ENCODE measurements at regions of chr5 and their contacts with region 1.

Region 1: DNA sequence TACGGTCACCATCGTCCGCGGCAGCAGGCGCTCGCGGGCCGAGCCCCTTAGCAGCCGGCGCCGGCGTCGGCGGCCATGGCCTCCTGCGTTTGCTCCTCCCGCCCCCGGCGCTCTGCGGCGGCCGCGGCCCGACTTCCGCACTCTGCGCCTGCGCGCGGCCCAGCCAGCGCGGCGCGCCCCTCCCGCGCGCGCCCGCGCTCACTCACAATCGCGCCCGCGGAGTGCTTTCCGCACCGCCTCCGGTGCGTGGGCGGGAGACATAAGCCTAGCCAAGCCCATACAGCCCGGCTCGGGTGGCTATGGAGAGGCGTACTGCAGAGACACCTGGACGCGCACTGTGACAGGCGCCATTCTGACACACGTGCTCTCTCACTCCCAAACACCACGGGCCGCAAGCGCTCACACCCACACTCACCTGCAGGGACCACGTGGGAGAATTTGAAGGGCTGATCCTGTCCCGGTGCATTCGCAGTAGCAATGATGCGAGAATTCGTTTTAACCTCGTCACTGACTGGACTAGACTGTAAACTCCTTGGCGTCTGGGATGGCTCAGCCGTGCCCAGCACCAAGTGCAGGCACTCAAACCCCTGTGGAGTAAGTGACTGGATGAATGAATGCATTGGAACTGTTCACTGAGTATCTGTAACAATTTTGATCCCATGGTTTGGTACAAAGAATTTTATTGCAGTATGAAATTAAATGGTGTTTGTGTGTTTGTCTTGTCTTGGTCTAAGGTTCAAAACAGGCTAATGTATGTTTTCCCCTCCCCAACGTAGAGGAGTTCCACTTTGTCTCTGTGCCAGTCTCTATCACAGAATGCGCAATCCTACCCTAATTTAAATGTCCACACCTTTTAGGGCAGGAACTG is at the start of gene RNF145:
- DNase-seq: peak; percentile 58
- ATAC-seq: peak; percentile 75
- H3K4me3 ChIP-seq: peak within 1 kb of the TSS; percentile 88 to 94 (median 93)
- H3K27ac ChIP-seq: peak within 1 kb of the TSS; percentile 83
- H3K4me1 ChIP-seq: peaks cover 35% of the 10 kb centered on the region
- H3K27me3 ChIP-seq: no peaks in the 10 kb centered on the region; a peak in 1 of 5 replicates
- CTCF ChIP-seq: no peak
- EP300 ChIP-seq: no peak
- POLR2A ChIP-seq: peak in 1 of 2 experiments; percentile 70; a peak in 2 of 4 replicates
- RAD21 ChIP-seq: 0 out of 2 replicates have a peak, but pooled peaks have one; percentile 10
- total RNA-seq, gene RNF145: 17.5 and 24.6 TPM in 2 replicates

Region 2: GRCh38 chr5:159156426-159157238 is 53.0 kb before region 1 on chr5:
- CTCF ChIA-PET with region 1: no interaction called
- POLR2A ChIA-PET with region 1: interaction called, 7 read pairs
- in situ Hi-C with region 1: no loop called
- intact Hi-C with region 1: loop called (anchors 2 kb)
- DNase-seq: peak; percentile 64
- ATAC-seq: peak; percentile 91
- H3K4me3 ChIP-seq: no peak overlapping the region
- H3K27ac ChIP-seq: no peak overlapping the region
- H3K4me1 ChIP-seq: no peaks in the 10 kb centered on the region
- H3K27me3 ChIP-seq: no peaks in the 10 kb centered on the region; a peak in 1 of 5 replicates
- CTCF ChIP-seq: peak; percentile 81
- EP300 ChIP-seq: no peak
- POLR2A ChIP-seq: no peak
- RAD21 ChIP-seq: peak; percentile 70

Region 3: DNA sequence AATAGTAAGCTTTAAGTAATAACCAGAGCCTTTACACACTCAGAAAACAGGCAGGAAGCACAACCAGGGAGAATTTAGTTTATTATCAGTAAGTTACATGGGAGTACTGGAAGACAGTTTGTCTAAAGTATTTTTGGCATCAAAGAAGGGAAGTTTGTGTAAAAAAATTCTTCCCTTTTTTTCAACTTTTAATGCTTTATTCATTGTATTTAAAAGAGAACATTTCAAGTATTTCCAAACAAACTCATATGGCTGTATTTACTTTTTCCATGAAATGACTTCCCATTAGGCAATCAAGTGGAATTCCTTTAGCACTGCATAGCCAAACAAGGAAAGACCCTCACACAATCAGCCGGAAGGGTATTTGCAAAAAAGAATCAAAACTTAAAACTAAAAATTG is 27.0 kb before region 1 on chr5:
- CTCF ChIA-PET with region 1: no interaction called
- POLR2A ChIA-PET with region 1: interaction called, 3 read pairs
- in situ Hi-C with region 1: no loop called
- intact Hi-C with region 1: loop called (anchors 2 kb)
- DNase-seq: peak; percentile 83
- ATAC-seq: peak; percentile 73
- H3K4me3 ChIP-seq: no peak overlapping the region; a peak in 1 of 6 replicates
- H3K27ac ChIP-seq: peak overlapping the region; percentile 58
- H3K4me1 ChIP-seq: peaks cover 51% of the 10 kb centered on the region
- H3K27me3 ChIP-seq: no peaks in the 10 kb centered on the region
- CTCF ChIP-seq: no peak
- EP300 ChIP-seq: peak in 1 of 2 experiments; percentile 66; a peak in 2 of 4 replicates
- POLR2A ChIP-seq: no peak
- RAD21 ChIP-seq: no peak

Region 4: DNA sequence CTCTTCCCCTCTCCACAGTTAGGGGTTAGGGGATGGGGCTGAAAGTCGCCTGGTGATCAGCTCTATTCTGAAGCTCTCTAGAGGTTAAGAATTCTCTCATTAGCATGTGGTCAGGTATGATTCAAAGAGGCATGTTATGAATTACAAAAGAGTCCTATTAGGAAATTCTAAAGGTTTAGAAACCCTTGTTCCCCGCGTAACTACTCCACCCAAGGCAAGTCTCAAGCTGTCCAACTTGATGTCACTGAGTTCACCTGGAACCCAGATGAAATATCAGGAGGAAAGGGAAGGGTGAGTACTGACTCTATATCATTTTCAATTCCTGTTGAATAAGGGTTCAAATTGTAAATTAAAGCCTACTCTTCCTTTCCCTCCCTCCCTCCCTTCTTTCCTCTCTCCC is 17.8 kb after region 1 on chr5:
- CTCF ChIA-PET with region 1: no interaction called
- POLR2A ChIA-PET with region 1: no interaction called
- in situ Hi-C with region 1: no loop called
- intact Hi-C with region 1: loop called (anchors 2 kb)
- DNase-seq: no peak
- ATAC-seq: no peak
- H3K4me3 ChIP-seq: no peak overlapping the region
- H3K27ac ChIP-seq: no peak overlapping the region
- H3K4me1 ChIP-seq: peaks cover 38% of the 10 kb centered on the region
- H3K27me3 ChIP-seq: peaks cover 0 to 2% of the 10 kb centered on the region in 2 experiments; a peak in 1 of 5 replicates
- CTCF ChIP-seq: no peak
- EP300 ChIP-seq: no peak
- POLR2A ChIP-seq: no peak
- RAD21 ChIP-seq: no peak

Region 5: DNA sequence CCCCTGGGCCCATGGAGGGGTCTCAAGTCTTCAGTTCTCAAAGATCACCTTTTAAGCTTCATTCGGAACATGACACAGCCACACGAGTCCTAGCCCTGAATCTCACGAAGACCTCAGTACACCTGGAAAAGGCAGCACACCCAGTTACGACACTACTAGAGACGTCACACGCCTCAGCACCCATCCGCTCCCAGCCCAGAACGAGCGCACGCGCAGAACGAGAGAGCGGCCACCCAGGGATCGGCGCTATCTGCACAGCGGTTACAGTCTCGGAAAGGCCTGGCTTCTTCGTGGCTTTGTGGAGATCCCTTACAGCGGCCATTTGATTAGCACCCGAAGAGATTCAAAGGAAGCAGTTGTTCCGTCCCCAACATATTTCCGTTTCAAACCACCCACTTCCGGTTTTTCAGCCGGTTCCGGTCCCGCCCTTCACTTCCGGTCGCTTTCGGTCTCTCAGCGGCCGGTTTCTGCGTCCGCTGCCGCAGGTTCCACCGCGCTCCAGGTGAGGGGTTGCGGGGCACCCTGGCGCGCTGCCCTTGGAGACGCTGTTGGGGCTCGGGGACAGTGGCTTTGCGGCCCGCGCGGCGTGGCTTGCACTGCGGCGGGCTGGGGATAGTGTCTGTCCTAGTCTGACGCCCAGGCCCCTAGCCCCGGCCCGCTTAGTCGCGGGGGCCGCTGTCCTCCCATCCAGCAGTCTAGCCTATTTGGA is 53.3 kb after region 1 on chr5 and contains the start of gene UBLCP1:
- CTCF ChIA-PET with region 1: no interaction called
- POLR2A ChIA-PET with region 1: interaction called, 4 read pairs
- in situ Hi-C with region 1: no loop called
- intact Hi-C with region 1: loop called (anchors 1 kb)
- DNase-seq: peak; percentile 76
- ATAC-seq: peak; percentile 96
- H3K4me3 ChIP-seq: peak within 1 kb of the TSS; percentile 94 to 98 (median 97)
- H3K27ac ChIP-seq: peak within 1 kb of the TSS; percentile 79
- H3K4me1 ChIP-seq: peaks cover 26% of the 10 kb centered on the region
- H3K27me3 ChIP-seq: no peaks in the 10 kb centered on the region; a peak in 1 of 5 replicates
- CTCF ChIP-seq: no peak
- EP300 ChIP-seq: no peak
- POLR2A ChIP-seq: peak; percentile 77 to 78; a peak in 3 of 4 replicates
- RAD21 ChIP-seq: peak; percentile 10; the same call in 1 of the 2 replicates
- total RNA-seq, gene UBLCP1: 12.6 and 20.2 TPM in 2 replicates

Region 6: GRCh38 chr5:160399402-160400353 is 1190.0 kb after region 1 on chr5 and contains the start of gene FAM200C:
- CTCF ChIA-PET with region 1: no interaction called
- POLR2A ChIA-PET with region 1: no interaction called
- in situ Hi-C with region 1: no loop called
- intact Hi-C with region 1: loop called (anchors 5 kb)
- DNase-seq: peak; percentile 90
- ATAC-seq: peak; percentile 98
- H3K4me3 ChIP-seq: peak within 1 kb of the TSS; percentile 65 to 90 (median 83)
- H3K27ac ChIP-seq: peak within 1 kb of the TSS; percentile 89
- H3K4me1 ChIP-seq: peaks cover 20% of the 10 kb centered on the region
- H3K27me3 ChIP-seq: no peaks in the 10 kb centered on the region; a peak in 1 of 5 replicates
- CTCF ChIP-seq: no peak
- EP300 ChIP-seq: no peak
- POLR2A ChIP-seq: peak; percentile 94 to 96
- RAD21 ChIP-seq: no peak
- total RNA-seq, gene FAM200C: 4.7 and 6.4 TPM in 2 replicates